ENCODE measurements at regions of chr11 and their contacts with region 1.

Region 1: GRCh38 chr11:121655537-121656327 is 203.0 kb upstream of the SORL1-AS1 start:
- DNase-seq: peak; percentile 82
- H3K4me3 Mint-ChIP-seq: peak overlapping the region; percentile 69
- H3K27ac Mint-ChIP-seq: peak overlapping the region; percentile 92
- H3K4me1 Mint-ChIP-seq: peaks cover 24% of the 10 kb centered on the region
- H3K27me3 Mint-ChIP-seq: no peaks in the 10 kb centered on the region
- CTCF ChIP-seq: peak; percentile 92

Region 2: GRCh38 chr11:121591405-121592033 is 64.2 kb before region 1 on chr11:
- CTCF ChIA-PET with region 1: interaction called, 3 read pairs
- POLR2A ChIA-PET with region 1: no interaction called
- intact Hi-C with region 1: loop called (anchors 2 kb)
- DNase-seq: peak; percentile 80
- H3K4me3 Mint-ChIP-seq: no peak overlapping the region
- H3K27ac Mint-ChIP-seq: no peak overlapping the region
- H3K4me1 Mint-ChIP-seq: peaks cover 24% of the 10 kb centered on the region
- H3K27me3 Mint-ChIP-seq: no peaks in the 10 kb centered on the region
- CTCF ChIP-seq: peak; percentile 86

Region 3: DNA sequence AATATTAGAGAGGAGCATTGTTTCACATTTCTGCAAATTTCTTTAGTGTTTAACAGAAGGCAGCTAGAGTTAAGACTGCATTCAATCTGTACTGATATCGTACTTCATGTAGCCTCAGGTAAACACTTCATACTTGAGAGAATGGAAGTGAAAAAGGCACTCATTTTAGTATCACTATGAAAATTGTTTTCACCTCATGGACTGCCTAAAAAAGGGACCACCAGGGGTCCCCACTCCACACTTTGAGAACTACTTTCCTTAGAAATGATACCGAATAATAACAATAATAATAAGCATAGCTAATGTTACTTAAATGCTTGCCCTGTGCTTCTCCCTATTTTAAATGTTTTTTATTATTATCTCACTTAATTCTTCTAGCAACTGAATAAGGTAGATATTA is 365.2 kb after region 1 on chr11:
- CTCF ChIA-PET with region 1: no interaction called
- POLR2A ChIA-PET with region 1: interaction called, 3 read pairs
- intact Hi-C with region 1: loop called (anchors 5 kb)
- DNase-seq: peak; percentile 16
- H3K4me3 Mint-ChIP-seq: no peak overlapping the region
- H3K27ac Mint-ChIP-seq: no peak overlapping the region
- H3K4me1 Mint-ChIP-seq: peaks cover under 1% of the 10 kb centered on the region
- H3K27me3 Mint-ChIP-seq: no peaks in the 10 kb centered on the region
- CTCF ChIP-seq: no peak

Region 4: GRCh38 chr11:122108192-122108799 is 452.6 kb after region 1 on chr11:
- CTCF ChIA-PET with region 1: interaction called, 82 read pairs
- POLR2A ChIA-PET with region 1: no interaction called
- intact Hi-C with region 1: no loop called
- DNase-seq: peak; percentile 60
- H3K4me3 Mint-ChIP-seq: no peak overlapping the region
- H3K27ac Mint-ChIP-seq: peak overlapping the region; percentile 47
- H3K4me1 Mint-ChIP-seq: peaks cover 40% of the 10 kb centered on the region
- H3K27me3 Mint-ChIP-seq: no peaks in the 10 kb centered on the region
- CTCF ChIP-seq: peak; percentile 50

Region 5: DNA sequence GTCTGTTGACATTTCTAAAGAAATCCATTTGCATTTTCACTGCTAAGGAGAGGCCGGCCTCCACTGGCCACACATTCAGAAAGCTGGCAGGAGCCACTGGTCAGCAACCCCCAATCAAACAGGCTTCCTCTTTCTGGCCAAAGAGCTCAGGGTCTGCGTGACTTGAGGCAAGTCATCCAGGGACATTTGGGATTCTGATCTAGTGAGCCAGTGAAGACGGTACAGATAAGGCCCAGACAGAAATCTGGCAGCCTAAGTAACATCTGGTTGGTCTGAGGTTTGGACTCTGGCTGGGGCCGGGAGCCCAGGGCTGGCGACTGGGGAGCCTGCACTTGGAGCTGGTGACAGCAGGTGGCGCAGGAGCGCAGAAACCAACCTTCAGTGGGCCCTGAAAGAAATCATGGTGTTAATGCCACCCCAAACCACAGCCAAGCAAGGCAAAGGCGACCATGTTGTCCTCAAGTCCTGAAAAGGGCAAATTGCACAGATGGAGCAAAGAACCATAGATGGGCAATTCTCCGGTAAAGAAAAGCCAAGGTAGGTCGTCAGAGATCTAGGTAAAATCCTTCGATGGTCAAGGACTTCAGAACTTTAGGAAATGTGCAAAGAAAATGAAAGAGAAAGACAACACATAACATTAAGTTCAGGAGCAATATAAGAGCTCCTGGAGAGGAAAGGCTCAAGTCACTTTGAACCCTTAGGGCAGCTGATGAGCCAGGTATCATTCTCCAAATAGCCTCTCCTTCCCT is 559.7 kb after region 1 on chr11:
- CTCF ChIA-PET with region 1: interaction called, 11 read pairs
- POLR2A ChIA-PET with region 1: interaction called, 3 read pairs
- intact Hi-C with region 1: loop called (anchors 2 kb)
- DNase-seq: peak; percentile 66
- H3K4me3 Mint-ChIP-seq: no peak overlapping the region
- H3K27ac Mint-ChIP-seq: no peak overlapping the region
- H3K4me1 Mint-ChIP-seq: peaks cover 21% of the 10 kb centered on the region
- H3K27me3 Mint-ChIP-seq: no peaks in the 10 kb centered on the region
- CTCF ChIP-seq: peak; percentile 89